ENCODE measurements at regions of chr12 and their contacts with region 1.

Region 1: DNA sequence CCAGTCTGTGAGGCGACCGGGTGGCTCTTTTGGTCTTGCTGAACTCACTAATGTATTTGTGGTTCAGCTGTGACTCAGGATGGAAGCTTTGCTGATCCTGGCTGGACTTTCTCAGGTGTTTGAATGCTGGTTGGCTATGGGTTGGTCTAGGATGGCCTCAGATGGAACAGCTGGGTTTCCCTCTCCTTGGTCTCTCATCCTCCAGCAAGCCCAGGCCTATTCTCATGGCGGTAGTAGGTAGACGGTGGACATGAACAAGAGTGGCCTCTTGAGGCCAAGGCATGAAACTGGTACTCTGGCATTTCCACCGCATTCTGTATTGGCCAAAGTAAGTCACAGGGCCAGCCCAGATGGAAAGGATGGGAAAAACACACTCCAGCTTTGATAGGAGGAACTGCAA is 11.8 kb upstream of the POLR3B start:
- DNase-seq: no peak
- ATAC-seq: peak; percentile 38

Region 2: GRCh38 chr12:106234449-106234848 is 111.3 kb before region 1 on chr12:
- intact Hi-C with region 1: loop called (anchors 10 kb)
- DNase-seq: no peak
- ATAC-seq: no peak

Region 3: DNA sequence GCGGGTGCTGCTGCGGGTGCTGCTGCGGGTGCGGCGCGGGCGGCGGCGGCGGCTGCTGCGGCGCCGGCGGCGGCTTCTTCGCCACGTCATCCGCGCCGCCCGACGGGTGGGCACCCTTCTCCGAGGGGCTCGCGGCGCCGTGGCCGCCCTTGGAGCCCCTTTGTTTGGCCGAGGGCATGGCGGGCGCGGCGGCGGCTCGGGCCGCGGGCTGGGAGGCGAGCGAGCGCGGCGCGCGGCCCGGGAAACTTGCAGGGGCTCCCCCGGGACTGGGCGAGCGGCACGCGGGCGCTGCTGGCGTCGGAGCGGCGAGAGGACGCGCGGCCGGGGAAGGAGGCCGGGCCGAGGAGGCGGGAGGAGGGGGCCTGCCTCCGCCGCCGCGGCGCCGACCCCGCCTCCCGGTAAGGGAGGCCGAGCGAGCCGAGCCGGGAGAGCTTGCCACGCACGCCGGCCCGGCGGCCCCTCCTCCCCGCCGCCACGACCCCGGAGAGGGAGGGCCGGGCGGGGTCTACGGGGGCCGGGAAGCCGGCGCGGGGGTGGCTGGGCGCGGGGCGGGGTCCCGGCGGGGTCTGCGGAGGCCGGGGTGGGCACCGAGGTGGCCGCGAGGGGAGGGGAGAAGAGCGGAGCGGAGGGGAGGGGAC is 97.9 kb before region 1 on chr12 and contains the start of gene CKAP4:
- intact Hi-C with region 1: no loop called
- DNase-seq: peak; percentile 92
- ATAC-seq: peak; percentile 82
- total RNA-seq, gene CKAP4: 37.5 TPM

Region 4: DNA sequence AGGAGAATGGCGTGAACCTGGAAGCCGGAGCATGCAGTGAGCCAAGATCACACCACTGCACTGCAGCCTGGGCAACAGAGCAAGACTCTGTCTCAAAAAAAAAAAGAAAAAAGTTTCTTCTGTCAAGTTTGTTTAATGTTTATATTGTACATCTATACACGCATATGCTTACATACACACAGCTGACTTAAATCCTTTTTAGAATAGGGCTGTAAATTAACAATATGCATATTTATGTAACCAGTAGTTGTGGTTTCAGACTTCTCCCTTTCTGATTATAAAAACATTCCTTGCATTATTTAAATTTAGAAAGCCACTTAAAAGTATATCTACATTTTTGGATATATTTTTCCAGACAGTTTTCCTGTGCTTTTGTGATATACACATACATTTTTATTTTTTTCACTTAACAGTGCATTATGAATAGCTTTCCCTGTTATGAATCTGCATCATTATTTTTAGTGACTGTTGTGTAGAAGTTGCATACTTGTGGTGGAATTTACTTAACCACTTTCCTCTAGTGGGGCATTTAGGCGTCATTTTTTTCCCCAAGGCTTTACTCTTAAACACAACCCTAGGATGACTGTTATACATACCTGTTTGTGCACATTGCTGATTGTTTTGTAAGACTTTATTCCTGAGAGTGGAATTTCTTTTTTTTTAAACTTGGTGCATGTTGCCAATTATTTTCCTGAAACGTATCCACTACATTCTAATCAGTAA is 41.2 kb after region 1 on chr12:
- intact Hi-C with region 1: no loop called
- DNase-seq: no peak
- ATAC-seq: no peak